ENCODE measurements at regions of chr10 and their contacts with region 1.

Region 1: DNA sequence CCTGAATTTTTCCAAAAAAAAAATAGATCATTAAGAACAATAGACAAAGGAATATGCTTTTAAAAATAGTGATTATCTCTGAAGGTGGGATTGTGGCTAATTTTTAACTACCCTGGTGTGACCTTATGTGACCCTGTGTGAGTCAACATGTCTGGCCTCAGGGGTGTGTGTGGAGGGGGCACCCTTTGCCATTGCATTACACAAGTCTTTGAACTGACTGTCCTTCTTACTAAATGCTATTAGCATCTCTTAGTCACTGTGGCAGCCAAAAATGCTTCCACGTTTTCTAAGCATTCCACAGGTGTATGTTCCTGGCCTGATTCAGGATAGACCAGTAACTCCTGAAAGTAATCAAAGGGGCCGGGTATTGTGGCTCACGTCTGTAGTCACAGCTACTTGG is 175.4 kb downstream of the MGMT start:
- DNase-seq: no peak
- H3K4me3 ChIP-seq: no peak overlapping the region
- H3K27ac ChIP-seq: no peak overlapping the region
- H3K4me1 ChIP-seq: no peaks in the 10 kb centered on the region
- H3K27me3 ChIP-seq: no peaks in the 10 kb centered on the region
- CTCF ChIP-seq: no peak
- POLR2A ChIP-seq: no peak

Region 2: GRCh38 chr10:127762925-127763324 is 1879.5 kb before region 1 on chr10:
- intact Hi-C with region 1: no loop called
- DNase-seq: no peak
- H3K4me3 ChIP-seq: no peak overlapping the region
- H3K27ac ChIP-seq: no peak overlapping the region
- H3K4me1 ChIP-seq: no peaks in the 10 kb centered on the region
- H3K27me3 ChIP-seq: no peaks in the 10 kb centered on the region
- CTCF ChIP-seq: no peak
- POLR2A ChIP-seq: no peak

Region 3: GRCh38 chr10:129580010-129580409 is 62.4 kb before region 1 on chr10:
- intact Hi-C with region 1: no loop called
- DNase-seq: no peak
- H3K4me3 ChIP-seq: no peak overlapping the region
- H3K27ac ChIP-seq: no peak overlapping the region
- H3K4me1 ChIP-seq: no peaks in the 10 kb centered on the region
- H3K27me3 ChIP-seq: no peaks in the 10 kb centered on the region
- CTCF ChIP-seq: no peak
- POLR2A ChIP-seq: no peak

Region 4: DNA sequence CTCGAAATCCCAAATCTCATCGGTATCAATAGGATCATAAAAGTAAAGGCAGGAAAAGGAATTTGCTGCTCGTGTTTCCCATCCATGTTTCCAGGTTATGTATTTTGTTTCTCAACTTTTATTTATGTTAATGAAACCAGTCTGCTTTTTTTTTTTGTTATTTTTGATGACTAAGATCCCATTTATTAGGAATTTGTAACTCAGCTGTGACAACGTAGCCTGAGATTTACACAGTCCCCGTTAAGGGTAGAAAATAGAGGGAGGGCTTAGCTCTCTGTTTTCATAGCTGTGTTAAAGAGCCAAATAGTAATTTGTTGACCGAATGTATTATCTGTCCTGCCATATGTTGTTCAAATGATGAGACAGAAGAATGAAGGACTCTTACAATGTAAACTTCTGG is 11.4 kb before region 1 on chr10:
- intact Hi-C with region 1: loop called (anchors 1 kb)
- DNase-seq: no peak
- H3K4me3 ChIP-seq: no peak overlapping the region
- H3K27ac ChIP-seq: no peak overlapping the region
- H3K4me1 ChIP-seq: no peaks in the 10 kb centered on the region
- H3K27me3 ChIP-seq: no peaks in the 10 kb centered on the region
- CTCF ChIP-seq: no peak
- POLR2A ChIP-seq: no peak